Cardiac septum (tissue), 1 donor: ENCODE measurements at regions of chr1 and their contacts with region 1.

Region 1: GRCh38 chr1:15323351-15323988 is 76.4 kb downstream of the FHAD1 start:
- DNase-seq: peak; percentile 88

Region 2: GRCh38 chr1:15261155-15262002 is 62.1 kb before region 1 on chr1:
- intact Hi-C with region 1: no loop called
- DNase-seq: no peak

Region 3: GRCh38 chr1:15430787-15431570 is 107.5 kb after region 1 on chr1:
- intact Hi-C with region 1: loop called (anchors 1 kb)
- DNase-seq: peak; percentile 88

Region 4: GRCh38 chr1:15501208-15502032 is 177.9 kb after region 1 on chr1:
- intact Hi-C with region 1: loop called (anchors 5 kb)
- DNase-seq: peak; percentile 80